ENCODE measurements at regions of chr20 and their contacts with region 1.

Region 1: GRCh38 chr20:56422076-56422823 is 10.2 kb downstream of the CASS4 start:
- DNase-seq: no peak
- ATAC-seq: no peak
- H3K4me3 Mint-ChIP-seq: peak overlapping the region; percentile 54
- H3K27ac Mint-ChIP-seq: peak overlapping the region; percentile 71
- H3K4me1 Mint-ChIP-seq: peaks cover 55% of the 10 kb centered on the region
- H3K27me3 Mint-ChIP-seq: no peaks in the 10 kb centered on the region

Region 2: GRCh38 chr20:56343861-56344381 is 78.3 kb before region 1 on chr20:
- POLR2A ChIA-PET with region 1: no interaction called
- DNase-seq: peak; percentile 70
- ATAC-seq: peak; percentile 74
- H3K4me3 Mint-ChIP-seq: no peak overlapping the region
- H3K27ac Mint-ChIP-seq: no peak overlapping the region
- H3K4me1 Mint-ChIP-seq: peaks cover 2% of the 10 kb centered on the region
- H3K27me3 Mint-ChIP-seq: peaks cover 71% of the 10 kb centered on the region

Region 3: GRCh38 chr20:56381501-56381900 is 40.7 kb before region 1 on chr20:
- POLR2A ChIA-PET with region 1: no interaction called
- DNase-seq: no peak
- ATAC-seq: no peak
- H3K4me3 Mint-ChIP-seq: no peak overlapping the region
- H3K27ac Mint-ChIP-seq: no peak overlapping the region
- H3K4me1 Mint-ChIP-seq: peaks cover 50% of the 10 kb centered on the region
- H3K27me3 Mint-ChIP-seq: no peaks in the 10 kb centered on the region

Region 4: DNA sequence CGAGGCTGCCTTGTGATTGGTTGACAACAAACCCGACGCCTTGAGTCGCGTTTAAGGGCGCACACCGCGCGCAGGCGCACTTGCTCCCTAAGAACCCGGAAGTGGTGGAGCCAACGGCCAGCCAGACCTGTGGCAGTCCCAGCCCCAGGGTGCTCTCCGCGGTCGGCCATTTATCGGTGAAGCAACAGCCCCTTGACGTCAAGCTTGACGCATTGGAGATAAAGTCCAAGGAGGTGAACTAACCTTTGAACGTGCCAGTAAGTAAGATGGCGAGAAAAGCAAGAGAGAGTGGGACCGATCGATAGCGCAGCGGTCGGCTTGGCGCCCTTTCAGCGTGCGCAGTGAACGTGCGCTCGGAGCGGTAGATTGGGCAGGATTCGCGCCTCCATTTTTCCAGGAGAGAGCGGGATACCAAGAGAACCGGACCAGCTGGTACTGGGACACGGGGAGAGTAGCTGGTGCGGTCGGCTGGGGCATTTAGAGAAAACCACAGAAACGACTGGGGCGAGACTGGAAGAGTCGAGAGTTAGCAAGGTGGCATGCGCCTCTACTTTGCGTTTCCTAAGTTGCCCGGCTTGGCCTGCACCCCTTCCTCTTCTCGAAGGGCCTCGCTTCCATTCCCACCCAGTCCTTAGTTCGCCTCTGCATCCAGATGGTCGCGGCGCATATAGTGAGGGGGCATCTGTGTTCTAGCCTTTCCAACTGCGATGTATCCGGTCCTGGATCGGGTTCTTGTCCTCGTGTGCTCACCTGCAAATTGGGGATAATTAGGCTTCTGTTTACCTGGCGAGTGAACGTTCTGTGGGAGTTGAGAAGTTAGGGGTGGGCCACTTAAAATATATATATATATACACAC is 29.7 kb before region 1 on chr20 and contains the start of gene CSTF1:
- POLR2A ChIA-PET with region 1: interaction called, 11 read pairs
- DNase-seq: peak; percentile 98
- ATAC-seq: peak; percentile 94
- H3K4me3 Mint-ChIP-seq: no peak within 1 kb of the TSS
- H3K27ac Mint-ChIP-seq: no peak within 1 kb of the TSS
- H3K4me1 Mint-ChIP-seq: peaks cover 35% of the 10 kb centered on the region
- H3K27me3 Mint-ChIP-seq: no peaks in the 10 kb centered on the region
- total RNA-seq, gene CSTF1: 55.7 to 58.3 TPM

Region 5: DNA sequence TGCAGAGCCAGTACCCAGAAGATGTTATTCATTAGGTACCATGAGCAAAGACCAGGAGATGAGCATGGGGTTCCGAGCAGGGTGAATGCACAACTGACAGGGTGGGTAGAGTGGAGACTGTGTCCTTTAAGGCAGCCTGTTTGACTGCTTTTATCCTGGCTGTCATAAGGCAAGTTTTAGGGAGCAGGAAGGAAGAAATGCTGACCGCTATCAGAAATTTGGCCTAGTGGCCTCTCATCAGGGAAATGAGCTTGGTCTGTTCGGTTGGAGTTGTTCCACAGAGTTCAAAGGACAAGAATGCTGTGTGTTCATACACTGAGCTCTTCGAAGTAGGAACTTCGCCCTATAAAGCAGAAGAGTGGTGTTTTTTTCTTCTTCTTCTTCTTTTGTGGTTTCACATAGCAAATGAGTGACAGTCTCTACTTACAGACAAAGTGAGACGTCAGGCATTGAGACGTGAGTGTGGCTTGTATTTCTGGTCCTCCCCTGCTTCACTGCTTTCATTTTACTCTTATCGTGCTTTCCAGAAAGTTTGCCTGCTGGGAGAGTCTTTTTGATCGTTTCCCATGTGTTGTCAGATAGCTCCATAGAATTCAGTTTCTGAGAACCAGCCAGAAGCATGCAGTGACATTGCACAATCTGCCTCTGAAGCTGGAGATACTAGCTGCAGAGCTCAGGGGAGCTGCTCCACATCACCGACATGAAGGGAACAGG is 10.3 kb before region 1 on chr20 and contains the start of gene CASS4:
- POLR2A ChIA-PET with region 1: interaction called, 11 read pairs
- DNase-seq: peak; percentile 53
- ATAC-seq: peak; percentile 79
- H3K4me3 Mint-ChIP-seq: peak within 1 kb of the TSS; percentile 95
- H3K27ac Mint-ChIP-seq: peak within 1 kb of the TSS; percentile 98
- H3K4me1 Mint-ChIP-seq: peaks cover 47% of the 10 kb centered on the region
- H3K27me3 Mint-ChIP-seq: no peaks in the 10 kb centered on the region
- total RNA-seq, gene CASS4: 14.2 to 18.7 TPM

Region 6: GRCh38 chr20:56439771-56440291 is 17.6 kb after region 1 on chr20:
- POLR2A ChIA-PET with region 1: interaction called, 34 read pairs
- DNase-seq: no peak
- ATAC-seq: peak; percentile 50
- H3K4me3 Mint-ChIP-seq: peak overlapping the region; percentile 59
- H3K27ac Mint-ChIP-seq: peak overlapping the region; percentile 87
- H3K4me1 Mint-ChIP-seq: peaks cover 45% of the 10 kb centered on the region
- H3K27me3 Mint-ChIP-seq: no peaks in the 10 kb centered on the region

Region 7: DNA sequence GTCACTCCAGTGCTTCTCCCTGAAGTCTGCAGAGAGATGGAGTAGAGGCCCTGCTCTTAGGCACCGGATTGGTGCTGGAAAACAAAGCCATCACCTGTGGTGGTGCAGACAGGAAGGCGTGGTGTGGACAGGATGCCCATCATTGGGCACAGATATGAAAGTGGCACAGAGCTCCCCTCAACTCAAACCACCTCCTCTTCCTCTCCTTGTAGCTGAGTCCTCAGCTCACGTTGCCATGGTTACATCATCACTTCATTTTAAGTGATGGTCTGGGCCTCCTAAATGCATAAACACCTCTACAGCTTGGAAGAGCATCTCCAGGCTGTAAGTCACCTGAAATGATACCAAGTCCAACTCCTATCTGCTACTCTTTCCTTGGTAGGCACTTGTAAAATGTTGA is 38.2 kb after region 1 on chr20:
- POLR2A ChIA-PET with region 1: interaction called, 11 read pairs
- DNase-seq: peak; percentile 52
- ATAC-seq: peak; percentile 92
- H3K4me3 Mint-ChIP-seq: peak overlapping the region; percentile 68
- H3K27ac Mint-ChIP-seq: peak overlapping the region; percentile 83
- H3K4me1 Mint-ChIP-seq: peaks cover 56% of the 10 kb centered on the region
- H3K27me3 Mint-ChIP-seq: no peaks in the 10 kb centered on the region

Measured in activated naive CD8-positive, alpha-beta T cell treated with anti-CD3 and anti-CD28 coated beads, Interleukin-2, amount 10 ng/mL, durations not matched to agents 7 days and 5 days (primary cell).